Left lung (tissue), 14 donors: ENCODE measurements at regions of chr18 and their contacts with region 1.

Region 1: DNA sequence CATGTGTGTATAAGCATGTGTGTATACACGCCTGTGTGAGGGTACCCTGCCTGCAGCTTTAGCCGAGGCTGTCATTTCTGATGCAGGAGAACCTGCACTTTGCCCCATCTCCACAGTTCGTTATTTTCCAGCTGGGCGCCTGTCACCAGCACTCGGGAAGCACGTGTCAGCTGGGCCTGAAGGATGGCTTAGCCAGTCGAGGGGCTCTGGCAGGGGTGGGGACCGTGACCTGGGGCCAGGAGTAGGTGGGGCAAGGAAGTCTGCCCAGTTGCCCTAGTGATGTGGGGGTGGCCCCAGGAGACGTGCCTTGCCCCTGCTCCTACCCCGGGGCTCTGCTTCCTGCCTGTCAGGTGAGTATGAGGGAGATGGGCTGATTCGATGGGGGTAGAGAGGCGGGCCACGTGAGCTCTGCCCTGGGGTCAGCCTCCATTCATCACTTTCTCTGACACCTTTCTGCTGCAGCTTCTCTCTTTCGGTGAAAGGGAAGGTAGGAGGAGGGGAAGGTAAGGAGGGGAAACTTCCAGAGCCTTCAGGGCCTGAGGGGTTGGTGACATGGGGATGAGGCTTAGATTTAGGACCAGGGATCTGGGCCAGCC is 130.6 kb upstream of the SKOR2 start:
- DNase-seq: no peak
- ATAC-seq: no peak
- H3K4me3 ChIP-seq: no peak overlapping the region
- H3K27ac ChIP-seq: no peak overlapping the region
- H3K4me1 ChIP-seq: no peaks in the 10 kb centered on the region
- H3K27me3 ChIP-seq: peaks cover 0 to 9% of the 10 kb centered on the region in 2 donors
- CTCF ChIP-seq: no peak

Region 2: DNA sequence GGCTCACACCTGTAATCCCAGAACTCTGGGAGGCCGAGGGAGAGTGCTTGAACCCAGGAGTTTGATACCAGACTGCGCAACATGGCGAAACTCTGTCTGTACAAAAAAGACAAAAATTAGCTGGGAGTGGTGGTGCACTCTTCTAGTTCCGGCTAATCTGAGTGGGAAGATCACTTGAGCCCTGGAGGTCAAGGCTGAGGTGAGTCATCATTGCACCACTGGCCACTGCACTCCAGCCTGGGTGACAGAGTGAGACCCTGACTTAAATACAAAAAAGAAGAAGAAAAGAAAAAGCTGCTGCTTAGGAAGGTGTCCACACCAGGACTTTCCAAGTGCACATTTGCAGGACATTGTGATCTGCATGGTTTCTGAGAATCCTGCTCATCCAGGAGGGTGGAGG is 147.0 kb before region 1 on chr18:
- intact Hi-C with region 1: no loop called
- DNase-seq: no peak
- ATAC-seq: no peak
- H3K4me3 ChIP-seq: no peak overlapping the region
- H3K27ac ChIP-seq: no peak overlapping the region
- H3K4me1 ChIP-seq: no peaks in the 10 kb centered on the region
- H3K27me3 ChIP-seq: peaks cover 14 to 80% of the 10 kb centered on the region in 2 donors
- CTCF ChIP-seq: no peak

Region 3: DNA sequence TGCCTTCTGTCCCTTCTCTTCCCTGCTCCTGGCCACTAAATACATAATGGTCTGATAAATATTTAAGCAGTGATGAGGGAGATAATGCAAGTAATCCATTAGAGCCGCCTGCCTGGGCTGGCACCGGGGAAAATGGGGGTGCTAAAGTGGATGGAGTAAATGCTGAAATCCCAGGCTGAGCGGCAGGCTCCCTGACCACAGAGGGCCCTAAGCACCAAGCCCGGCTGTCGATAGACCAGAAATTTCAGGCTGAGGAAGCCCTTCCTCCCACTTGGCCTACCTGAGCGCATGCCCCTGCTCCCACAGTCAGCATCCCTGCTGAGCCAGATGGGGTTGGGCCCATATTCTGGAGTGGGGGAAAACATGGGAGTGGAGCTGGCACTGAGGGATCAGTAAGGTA is 66.9 kb after region 1 on chr18:
- intact Hi-C with region 1: loop called in 1 of 2 experiments (anchors 10 kb)
- DNase-seq: no peak
- ATAC-seq: no peak
- H3K4me3 ChIP-seq: no peak overlapping the region
- H3K27ac ChIP-seq: no peak overlapping the region
- H3K4me1 ChIP-seq: no peaks in the 10 kb centered on the region
- H3K27me3 ChIP-seq: no peaks in the 10 kb centered on the region
- CTCF ChIP-seq: no peak

Region 4: DNA sequence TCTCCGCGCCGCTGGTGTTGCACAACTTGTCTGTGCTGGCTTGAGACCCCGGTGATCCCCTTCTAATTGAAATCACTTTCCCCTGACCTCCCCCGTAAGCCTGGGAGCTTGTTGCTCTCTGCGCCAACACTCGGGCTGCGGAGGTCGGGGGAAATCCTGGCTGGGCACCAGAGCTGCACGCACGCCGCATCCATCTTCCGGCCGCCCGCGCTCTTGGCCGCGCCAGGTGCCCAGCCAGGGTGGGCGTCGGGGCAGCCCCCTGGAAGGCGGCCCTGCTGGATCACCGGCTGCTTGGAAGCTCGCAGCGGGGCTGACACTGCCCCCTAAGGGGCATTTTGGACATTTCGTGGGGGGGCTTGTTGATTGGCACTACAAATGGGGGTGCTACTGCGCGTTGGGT is 149.6 kb after region 1 on chr18:
- intact Hi-C with region 1: no loop called
- DNase-seq: no peak
- ATAC-seq: no peak
- H3K4me3 ChIP-seq: no peak overlapping the region
- H3K27ac ChIP-seq: no peak overlapping the region
- H3K4me1 ChIP-seq: no peaks in the 10 kb centered on the region
- H3K27me3 ChIP-seq: peaks cover 11 to 46% of the 10 kb centered on the region in 2 donors
- CTCF ChIP-seq: no peak

Region 5: GRCh38 chr18:47930931-47931717 is 549.1 kb after region 1 on chr18:
- intact Hi-C with region 1: no loop called
- DNase-seq: peak; percentile 94 to 98 (median 98)
- ATAC-seq: peak; percentile 90
- H3K4me3 ChIP-seq: peak overlapping the region; percentile 65 to 84
- H3K27ac ChIP-seq: peak overlapping the region; percentile 98 to 99
- H3K4me1 ChIP-seq: peaks cover 6 to 53% of the 10 kb centered on the region in 2 donors
- H3K27me3 ChIP-seq: no peaks in the 10 kb centered on the region
- CTCF ChIP-seq: no peak

Region 6: DNA sequence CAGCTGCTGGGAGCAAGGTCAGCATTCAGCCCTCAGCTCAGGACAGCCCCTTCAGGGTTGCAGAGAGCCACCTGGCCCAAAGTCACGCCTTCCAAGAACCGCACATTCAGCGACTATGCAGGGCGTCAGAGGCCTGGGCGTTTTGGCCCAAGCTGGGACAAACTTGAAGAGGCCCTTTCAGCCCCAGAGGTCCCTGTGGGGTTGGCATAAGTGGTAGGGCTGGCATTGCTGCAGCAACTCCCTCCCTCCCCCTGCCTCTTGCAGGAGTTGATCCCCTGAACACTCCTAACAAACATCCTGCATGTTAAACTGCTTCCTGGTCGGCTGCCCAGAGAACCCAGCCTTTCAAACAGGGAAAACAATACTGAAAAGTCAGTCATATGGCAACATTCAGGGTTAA is 741.3 kb after region 1 on chr18:
- intact Hi-C with region 1: no loop called
- DNase-seq: no peak
- ATAC-seq: peak; percentile 28
- H3K4me3 ChIP-seq: no peak overlapping the region
- H3K27ac ChIP-seq: no peak overlapping the region
- H3K4me1 ChIP-seq: no peaks in the 10 kb centered on the region
- H3K27me3 ChIP-seq: no peaks in the 10 kb centered on the region
- CTCF ChIP-seq: no peak